ENCODE measurements at regions of chr2 and their contacts with region 1.

Region 1: GRCh38 chr2:106160786-106161261 is 33.3 kb downstream of the UXS1 start:
- DNase-seq: no peak
- H3K4me3 Mint-ChIP-seq: no peak overlapping the region
- H3K27ac Mint-ChIP-seq: peak overlapping the region; percentile 89
- H3K4me1 Mint-ChIP-seq: peaks cover 50% of the 10 kb centered on the region
- H3K27me3 Mint-ChIP-seq: no peaks in the 10 kb centered on the region
- CTCF ChIP-seq: no peak

Region 2: GRCh38 chr2:106044021-106044420 is 116.8 kb before region 1 on chr2:
- CTCF ChIA-PET with region 1: no interaction called
- intact Hi-C with region 1: no loop called
- DNase-seq: no peak
- H3K4me3 Mint-ChIP-seq: no peak overlapping the region
- H3K27ac Mint-ChIP-seq: no peak overlapping the region
- H3K4me1 Mint-ChIP-seq: no peaks in the 10 kb centered on the region
- H3K27me3 Mint-ChIP-seq: no peaks in the 10 kb centered on the region
- CTCF ChIP-seq: no peak

Region 3: GRCh38 chr2:106115250-106115649 is 45.6 kb before region 1 on chr2:
- CTCF ChIA-PET with region 1: no interaction called
- intact Hi-C with region 1: loop called (anchors 5 kb)
- DNase-seq: peak; percentile 45
- H3K4me3 Mint-ChIP-seq: no peak overlapping the region
- H3K27ac Mint-ChIP-seq: peak overlapping the region; percentile 50
- H3K4me1 Mint-ChIP-seq: peaks cover 44% of the 10 kb centered on the region
- H3K27me3 Mint-ChIP-seq: no peaks in the 10 kb centered on the region
- CTCF ChIP-seq: no peak

Region 4: GRCh38 chr2:106193977-106194778 is 33.4 kb after region 1 on chr2 and contains the start of gene UXS1:
- CTCF ChIA-PET with region 1: interaction called, 5 read pairs
- intact Hi-C with region 1: loop called (anchors 2 kb)
- DNase-seq: peak; percentile 97
- H3K4me3 Mint-ChIP-seq: peak within 1 kb of the TSS; percentile 74
- H3K27ac Mint-ChIP-seq: peak within 1 kb of the TSS; percentile 76
- H3K4me1 Mint-ChIP-seq: peaks cover 40% of the 10 kb centered on the region
- H3K27me3 Mint-ChIP-seq: no peaks in the 10 kb centered on the region
- CTCF ChIP-seq: no peak
- total RNA-seq, gene UXS1: 71.1 and 87.7 TPM in 2 replicates

Measured in Calu3 (cell line).